RWPE1 (cell line): ENCODE measurements at regions of chr1 and their contacts with region 1.

Region 1: DNA sequence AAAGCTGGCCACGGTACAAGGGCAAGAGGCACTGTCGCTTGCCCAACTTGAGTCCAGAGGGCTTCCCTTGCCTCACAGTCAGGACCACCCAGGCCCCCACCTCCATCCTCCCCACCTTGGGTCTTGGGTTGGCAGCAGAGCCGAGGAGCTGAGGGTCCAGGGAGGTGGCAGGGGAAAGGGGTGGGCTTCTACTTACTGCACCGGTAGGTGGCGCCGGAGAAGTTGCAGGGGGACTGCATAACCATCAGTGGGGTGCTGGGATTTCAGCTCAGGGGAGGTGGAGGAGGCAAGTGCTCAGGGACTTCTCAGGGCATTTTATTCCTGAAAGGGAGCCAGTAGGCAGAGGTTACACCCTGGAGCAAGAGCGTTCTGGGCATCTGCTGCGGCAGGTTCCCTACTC is 44.0 kb downstream of the TRIM62 start:
- DNase-seq: no peak
- H3K27ac ChIP-seq: no peak overlapping the region
- CTCF ChIP-seq: peak; percentile 48

Region 2: GRCh38 chr1:32636914-32637645 is 500.7 kb before region 1 on chr1:
- CTCF ChIA-PET with region 1: interaction called, 12 read pairs
- POLR2A ChIA-PET with region 1: no interaction called
- DNase-seq: peak; percentile 6
- H3K27ac ChIP-seq: no peak overlapping the region
- CTCF ChIP-seq: no peak